AG04449 (cell line): ENCODE measurements at regions of chr19 and their contacts with region 1.

Region 1: DNA sequence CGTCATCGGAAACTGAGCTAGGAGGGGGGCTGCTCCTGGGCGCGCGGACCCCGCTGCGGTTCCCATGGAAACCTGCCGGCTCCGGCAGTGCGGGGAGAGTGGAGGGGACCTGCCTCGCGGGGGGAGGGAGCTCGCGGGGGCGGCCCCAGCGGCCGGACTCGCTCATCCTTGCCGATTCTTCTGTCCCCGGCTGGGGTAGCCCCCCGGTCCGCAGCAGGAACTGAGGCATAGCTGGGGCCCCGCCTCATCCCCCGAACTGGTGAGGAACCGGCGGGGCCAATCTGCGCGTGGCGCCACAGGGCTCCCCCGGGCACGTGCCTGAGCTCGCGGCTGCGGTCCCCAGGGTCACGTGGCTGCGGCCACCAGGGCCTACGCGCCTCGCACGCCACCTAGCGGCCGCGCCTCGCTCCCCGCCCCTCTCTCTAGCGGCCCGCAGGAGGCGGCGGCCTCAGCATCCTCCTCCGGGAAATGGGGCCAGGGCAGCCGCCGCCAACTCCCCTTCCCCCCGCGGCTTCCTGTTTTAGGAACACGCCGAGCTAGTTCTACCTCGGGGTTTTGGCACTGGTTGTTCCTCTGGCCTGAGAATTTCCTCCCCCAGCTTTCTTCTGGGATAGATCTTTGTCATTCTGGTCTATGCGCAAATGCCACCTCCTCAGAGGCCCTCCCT is 1.7 kb upstream of the ELAVL3 start:
- DNase-seq: peak; percentile 9
- H3K4me3 ChIP-seq: peak overlapping the region; percentile 54
- CTCF ChIP-seq: peak; percentile 98

Region 2: GRCh38 chr19:11242864-11243797 is 239.4 kb before region 1 on chr19:
- CTCF ChIA-PET with region 1: interaction called, 14 read pairs
- POLR2A ChIA-PET with region 1: no interaction called
- DNase-seq: no peak
- H3K4me3 ChIP-seq: no peak overlapping the region
- CTCF ChIP-seq: peak; percentile 36

Region 3: DNA sequence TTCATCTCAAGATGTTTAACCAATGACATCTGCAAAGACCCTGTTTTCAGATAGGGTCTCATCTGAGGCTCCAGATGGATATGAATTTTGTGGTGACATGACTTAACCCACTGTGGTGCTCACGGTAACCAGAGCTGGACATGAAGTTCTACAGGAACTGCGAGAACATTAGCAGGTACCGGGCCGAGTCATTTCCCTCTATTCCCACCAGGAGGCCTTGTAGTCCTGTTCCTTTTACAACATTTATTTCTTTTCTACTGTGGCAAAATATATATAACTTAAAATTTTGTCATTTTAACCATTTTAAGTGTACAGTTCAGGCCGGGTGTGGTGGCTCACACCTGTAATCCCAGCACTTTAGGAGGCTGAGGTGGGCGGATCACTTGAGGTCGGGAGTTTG is 194.2 kb before region 1 on chr19:
- CTCF ChIA-PET with region 1: interaction called, 89 read pairs
- POLR2A ChIA-PET with region 1: no interaction called
- DNase-seq: no peak
- H3K4me3 ChIP-seq: no peak overlapping the region
- CTCF ChIP-seq: peak; percentile 37

Region 4: DNA sequence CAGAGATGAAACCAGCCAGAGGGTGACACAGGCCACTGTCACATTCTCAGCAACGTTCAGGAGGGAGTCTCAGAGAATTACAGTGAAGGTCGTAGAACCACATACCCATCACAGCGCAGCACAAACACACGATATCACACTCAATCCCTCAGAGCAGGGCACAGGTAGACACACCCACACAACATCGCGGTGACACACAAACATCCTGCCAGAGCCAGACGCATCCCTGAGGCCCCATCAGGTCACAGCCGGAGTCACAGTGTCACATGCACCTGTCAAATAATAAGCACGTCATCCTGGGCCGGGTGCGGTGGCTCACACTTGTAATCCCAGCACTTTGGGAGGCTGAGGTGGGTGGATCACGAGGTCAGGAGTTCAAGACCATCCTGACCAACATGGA is 19.1 kb before region 1 on chr19:
- CTCF ChIA-PET with region 1: interaction called, 32 read pairs
- POLR2A ChIA-PET with region 1: no interaction called
- DNase-seq: no peak
- H3K4me3 ChIP-seq: no peak overlapping the region
- CTCF ChIP-seq: no peak

Region 5: GRCh38 chr19:11496391-11497163 is 14.1 kb after region 1 on chr19:
- CTCF ChIA-PET with region 1: interaction called, 55 read pairs
- POLR2A ChIA-PET with region 1: no interaction called
- DNase-seq: peak; percentile 24
- H3K4me3 ChIP-seq: no peak overlapping the region
- CTCF ChIP-seq: peak; percentile 80